HCT116 (cell line): ENCODE measurements at regions of chr9 and their contacts with region 1.

Region 1: DNA sequence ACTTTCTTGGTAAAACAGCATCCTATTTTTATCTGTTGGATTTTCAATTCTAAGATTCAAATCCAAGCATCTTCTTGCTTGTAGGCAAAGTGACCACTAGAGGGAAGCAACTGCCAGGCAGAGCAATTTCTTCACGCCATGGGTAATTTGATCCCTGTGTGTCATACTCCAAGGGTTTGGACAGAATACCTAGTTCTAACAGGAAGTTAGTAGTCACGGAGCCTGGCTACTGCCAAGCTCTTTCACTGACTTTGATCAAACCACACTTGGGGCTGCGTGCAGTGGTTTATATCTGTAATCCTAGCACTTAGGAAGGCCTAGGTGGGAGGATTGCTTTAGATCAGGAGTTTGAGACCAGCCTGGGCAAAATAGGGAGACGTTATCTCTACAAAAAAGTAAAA is 473.6 kb upstream of the TNC start:
- DNase-seq: peak; percentile 84
- ATAC-seq: peak; percentile 91
- H3K4me3 ChIP-seq: no peak overlapping the region
- H3K27ac ChIP-seq: no peak overlapping the region
- H3K4me1 ChIP-seq: peaks cover 7 to 11% of the 10 kb centered on the region in 2 experiments
- H3K27me3 ChIP-seq: peaks cover 26% of the 10 kb centered on the region
- CTCF ChIP-seq: peak; percentile 46 to 73 (median 72); a peak in 5 of 6 replicates
- POLR2A ChIP-seq: no peak
- RAD21 ChIP-seq: peak; percentile 79

Region 2: GRCh38 chr9:115883457-115884329 is 292.1 kb after region 1 on chr9:
- CTCF ChIA-PET with region 1: interaction called, 14 read pairs
- POLR2A ChIA-PET with region 1: no interaction called
- RAD21 ChIA-PET with region 1: no interaction called
- intact Hi-C with region 1: loop called (anchors 5 kb)
- DNase-seq: peak; percentile 12
- ATAC-seq: peak; percentile 95
- H3K4me3 ChIP-seq: no peak overlapping the region
- H3K27ac ChIP-seq: no peak overlapping the region
- H3K4me1 ChIP-seq: no peaks in the 10 kb centered on the region
- H3K27me3 ChIP-seq: peaks cover 52% of the 10 kb centered on the region
- CTCF ChIP-seq: peak; percentile 69 to 74 (median 73)
- POLR2A ChIP-seq: no peak
- RAD21 ChIP-seq: peak; percentile 83

Region 3: GRCh38 chr9:116494815-116495634 is 903.4 kb after region 1 on chr9:
- CTCF ChIA-PET with region 1: interaction called, 3 read pairs
- POLR2A ChIA-PET with region 1: no interaction called
- RAD21 ChIA-PET with region 1: no interaction called
- intact Hi-C with region 1: loop called (anchors 5 kb)
- DNase-seq: peak; percentile 35
- ATAC-seq: peak; percentile 83
- H3K4me3 ChIP-seq: no peak overlapping the region
- H3K27ac ChIP-seq: no peak overlapping the region
- H3K4me1 ChIP-seq: peaks cover 7 to 29% of the 10 kb centered on the region in 2 experiments; a peak in 3 of 4 replicates
- H3K27me3 ChIP-seq: no peaks in the 10 kb centered on the region
- CTCF ChIP-seq: peak; percentile 50 to 88 (median 86)
- POLR2A ChIP-seq: no peak
- RAD21 ChIP-seq: peak; percentile 64

Region 4: GRCh38 chr9:116646661-116647512 is 1055.3 kb after region 1 on chr9:
- CTCF ChIA-PET with region 1: no interaction called
- POLR2A ChIA-PET with region 1: no interaction called
- RAD21 ChIA-PET with region 1: no interaction called
- intact Hi-C with region 1: loop called (anchors 5 kb)
- DNase-seq: peak; percentile 24
- ATAC-seq: peak; percentile 93
- H3K4me3 ChIP-seq: no peak overlapping the region
- H3K27ac ChIP-seq: no peak overlapping the region
- H3K4me1 ChIP-seq: no peaks in the 10 kb centered on the region
- H3K27me3 ChIP-seq: no peaks in the 10 kb centered on the region
- CTCF ChIP-seq: peak; percentile 55 to 66 (median 56); a peak in 5 of 6 replicates
- POLR2A ChIP-seq: no peak
- RAD21 ChIP-seq: peak; percentile 70

Region 5: GRCh38 chr9:116860509-116861120 is 1269.0 kb after region 1 on chr9:
- CTCF ChIA-PET with region 1: no interaction called
- POLR2A ChIA-PET with region 1: no interaction called
- RAD21 ChIA-PET with region 1: no interaction called
- intact Hi-C with region 1: loop called (anchors 5 kb)
- DNase-seq: peak; percentile 51
- ATAC-seq: peak; percentile 95
- H3K4me3 ChIP-seq: no peak overlapping the region
- H3K27ac ChIP-seq: no peak overlapping the region
- H3K4me1 ChIP-seq: peaks cover 0 to 3% of the 10 kb centered on the region in 2 experiments; a peak in 1 of 4 replicates
- H3K27me3 ChIP-seq: peaks cover 13% of the 10 kb centered on the region; the same call in 1 of the 2 replicates
- CTCF ChIP-seq: peak; percentile 45 to 79 (median 72); a peak in 5 of 6 replicates
- POLR2A ChIP-seq: no peak
- RAD21 ChIP-seq: peak; percentile 56